ENCODE measurements at regions of chr5 and their contacts with region 1.

Region 1: GRCh38 chr5:62450259-62450658 is 37.7 kb downstream of the IPO11 start:
- DNase-seq: no peak
- H3K4me3 ChIP-seq: no peak overlapping the region
- H3K27ac ChIP-seq: no peak overlapping the region
- H3K27me3 ChIP-seq: no peaks in the 10 kb centered on the region
- CTCF ChIP-seq: no peak

Region 2: GRCh38 chr5:61991866-61992265 is 458.4 kb before region 1 on chr5:
- CTCF ChIA-PET with region 1: no interaction called
- POLR2A ChIA-PET with region 1: no interaction called
- DNase-seq: no peak
- H3K4me3 ChIP-seq: no peak overlapping the region
- H3K27ac ChIP-seq: no peak overlapping the region
- H3K27me3 ChIP-seq: no peaks in the 10 kb centered on the region
- CTCF ChIP-seq: no peak

Region 3: GRCh38 chr5:62268234-62268633 is 182.0 kb before region 1 on chr5:
- CTCF ChIA-PET with region 1: no interaction called
- POLR2A ChIA-PET with region 1: no interaction called
- DNase-seq: no peak
- H3K4me3 ChIP-seq: no peak overlapping the region
- H3K27ac ChIP-seq: no peak overlapping the region
- H3K27me3 ChIP-seq: no peaks in the 10 kb centered on the region
- CTCF ChIP-seq: no peak

Region 4: GRCh38 chr5:62305715-62306322 is 144.4 kb before region 1 on chr5 and contains the start of gene KIF2A:
- CTCF ChIA-PET with region 1: no interaction called
- POLR2A ChIA-PET with region 1: no interaction called
- DNase-seq: peak; percentile 73
- H3K4me3 ChIP-seq: peak within 1 kb of the TSS; percentile 81
- H3K27ac ChIP-seq: peak within 1 kb of the TSS; percentile 65
- H3K27me3 ChIP-seq: no peaks in the 10 kb centered on the region
- CTCF ChIP-seq: peak; percentile 9; the same call in 1 of the 2 replicates
- polyA plus RNA-seq, gene KIF2A: 37.2 and 50.8 TPM in 2 replicates

Region 5: DNA sequence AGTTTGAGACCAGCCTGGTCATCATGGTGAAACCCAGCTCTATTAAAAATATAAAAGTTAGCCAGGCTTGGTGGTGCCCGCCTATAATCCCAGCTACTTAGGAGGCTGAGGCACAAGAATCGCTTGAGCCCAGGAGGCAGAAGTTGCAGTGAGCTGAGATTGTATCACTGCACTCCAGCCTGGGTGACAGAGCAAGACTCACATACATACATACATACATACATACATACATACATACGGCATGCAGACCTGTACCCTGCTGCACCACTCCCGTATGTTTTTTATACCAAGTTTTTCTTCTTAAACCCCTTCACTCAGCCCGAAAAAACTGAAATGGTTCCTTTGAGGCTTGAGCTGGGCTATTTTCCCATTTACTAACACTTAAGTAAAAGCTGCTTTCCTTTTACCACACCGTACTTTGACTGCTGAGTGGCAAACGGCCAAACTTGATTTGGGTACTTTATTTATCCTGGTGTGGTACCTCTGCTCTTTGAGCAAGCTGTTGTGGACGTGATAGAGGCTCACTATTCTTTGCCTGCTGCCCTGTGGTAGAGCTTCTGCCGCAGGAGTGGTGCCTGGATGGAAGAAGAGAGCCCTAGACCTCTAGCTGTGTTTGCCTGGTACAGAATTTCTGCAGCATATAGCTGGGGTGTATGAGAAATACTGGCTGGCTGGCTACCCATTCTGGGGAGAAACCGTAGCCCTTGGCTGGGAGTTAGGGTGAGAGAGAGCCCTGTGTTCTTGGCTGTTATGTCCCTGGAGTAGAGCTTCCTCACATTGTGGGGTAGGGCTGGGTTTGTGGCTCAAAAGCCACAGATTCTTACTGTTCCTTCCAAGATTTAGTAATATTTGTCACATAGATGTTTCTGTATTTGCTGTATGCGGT is 18.3 kb before region 1 on chr5:
- CTCF ChIA-PET with region 1: interaction called, 36 read pairs
- POLR2A ChIA-PET with region 1: no interaction called
- DNase-seq: no peak
- H3K4me3 ChIP-seq: no peak overlapping the region
- H3K27ac ChIP-seq: no peak overlapping the region
- H3K27me3 ChIP-seq: no peaks in the 10 kb centered on the region
- CTCF ChIP-seq: no peak

Region 6: DNA sequence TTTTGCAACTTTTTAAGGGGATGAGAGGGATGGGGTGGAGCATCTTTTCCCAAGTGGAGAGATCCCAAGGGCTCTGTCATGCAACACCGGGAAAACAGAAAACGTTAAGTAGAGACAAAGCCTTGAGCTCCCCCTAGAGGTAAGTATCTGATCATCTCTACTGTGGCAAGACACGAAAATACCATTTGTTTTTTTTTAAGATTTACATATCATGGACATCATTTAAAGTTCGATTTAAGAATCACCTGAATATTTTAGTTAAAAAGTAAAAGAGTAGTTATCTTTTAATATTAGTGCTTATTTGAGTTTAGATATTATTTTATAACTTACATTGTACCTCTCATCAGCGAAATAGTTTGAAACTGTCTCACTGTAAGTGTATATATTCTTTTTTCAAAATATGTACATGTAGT is 328.8 kb after region 1 on chr5:
- CTCF ChIA-PET with region 1: interaction called, 78 read pairs
- POLR2A ChIA-PET with region 1: no interaction called
- DNase-seq: peak; percentile 21
- H3K4me3 ChIP-seq: no peak overlapping the region
- H3K27ac ChIP-seq: no peak overlapping the region
- H3K27me3 ChIP-seq: no peaks in the 10 kb centered on the region
- CTCF ChIP-seq: peak; percentile 74

Measured in AG04450 (cell line).